Activated CD8-positive, alpha-beta T cell treated with anti-CD3 and anti-CD28 coated beads, Interleukin-2, amount 10 ng/mL, durations not matched to agents 7 days and 5 days (primary cell): ENCODE measurements at regions of chr17 and their contacts with region 1.

Region 1: GRCh38 chr17:72556944-72557826 is 436.4 kb downstream of the SOX9 start:
- DNase-seq: peak; percentile 78
- ATAC-seq: peak; percentile 85
- H3K4me3 Mint-ChIP-seq: no peak overlapping the region
- H3K27ac Mint-ChIP-seq: no peak overlapping the region
- H3K4me1 Mint-ChIP-seq: no peaks in the 10 kb centered on the region
- H3K27me3 Mint-ChIP-seq: no peaks in the 10 kb centered on the region

Region 2: GRCh38 chr17:72578817-72579470 is 21.8 kb after region 1 on chr17:
- CTCF ChIA-PET with region 1: interaction called, 12 read pairs
- POLR2A ChIA-PET with region 1: no interaction called
- DNase-seq: no peak
- ATAC-seq: no peak
- H3K4me3 Mint-ChIP-seq: no peak overlapping the region
- H3K27ac Mint-ChIP-seq: no peak overlapping the region
- H3K4me1 Mint-ChIP-seq: no peaks in the 10 kb centered on the region
- H3K27me3 Mint-ChIP-seq: peaks cover 30% of the 10 kb centered on the region

Region 3: DNA sequence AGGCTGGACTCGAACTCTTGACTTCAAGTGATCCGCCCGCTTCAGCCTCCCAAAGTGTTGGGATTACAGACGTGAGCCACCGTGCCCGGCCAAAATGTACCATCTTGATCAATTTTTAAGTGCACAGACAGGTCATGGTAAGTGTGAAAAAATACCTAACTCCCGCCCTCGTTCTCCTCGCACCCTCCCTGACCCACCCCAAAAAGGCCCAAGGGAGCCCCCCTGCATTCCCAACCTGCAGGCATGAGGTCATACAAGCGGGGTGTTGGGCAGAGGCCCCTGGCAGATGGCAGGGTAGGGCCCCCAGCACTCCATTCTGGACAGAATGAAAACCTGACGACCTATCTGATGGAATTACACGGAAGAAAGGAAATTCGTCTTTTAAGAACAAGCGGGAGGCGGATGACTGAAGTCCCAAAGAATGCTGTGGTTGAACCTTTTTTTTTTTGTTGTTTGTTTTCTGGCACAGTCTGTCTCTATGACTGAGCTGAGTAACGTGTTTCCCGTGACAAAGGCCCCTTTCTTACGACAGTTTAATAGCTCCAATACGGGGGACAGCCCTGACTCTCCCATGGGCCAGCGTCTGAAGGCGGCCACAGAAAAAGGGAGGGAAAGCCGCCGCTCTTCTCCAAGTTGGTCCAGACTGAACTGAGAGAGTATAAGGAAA is 158.9 kb after region 1 on chr17:
- CTCF ChIA-PET with region 1: interaction called, 259 read pairs
- POLR2A ChIA-PET with region 1: no interaction called
- DNase-seq: no peak
- ATAC-seq: no peak
- H3K4me3 Mint-ChIP-seq: no peak overlapping the region
- H3K27ac Mint-ChIP-seq: no peak overlapping the region
- H3K4me1 Mint-ChIP-seq: peaks cover 54% of the 10 kb centered on the region
- H3K27me3 Mint-ChIP-seq: no peaks in the 10 kb centered on the region

Region 4: GRCh38 chr17:73156166-73156840 is 599.1 kb after region 1 on chr17:
- CTCF ChIA-PET with region 1: interaction called, 46 read pairs
- POLR2A ChIA-PET with region 1: no interaction called
- DNase-seq: peak; percentile 70
- ATAC-seq: peak; percentile 95
- H3K4me3 Mint-ChIP-seq: no peak overlapping the region
- H3K27ac Mint-ChIP-seq: no peak overlapping the region
- H3K4me1 Mint-ChIP-seq: no peaks in the 10 kb centered on the region
- H3K27me3 Mint-ChIP-seq: peaks cover 20% of the 10 kb centered on the region

Region 5: DNA sequence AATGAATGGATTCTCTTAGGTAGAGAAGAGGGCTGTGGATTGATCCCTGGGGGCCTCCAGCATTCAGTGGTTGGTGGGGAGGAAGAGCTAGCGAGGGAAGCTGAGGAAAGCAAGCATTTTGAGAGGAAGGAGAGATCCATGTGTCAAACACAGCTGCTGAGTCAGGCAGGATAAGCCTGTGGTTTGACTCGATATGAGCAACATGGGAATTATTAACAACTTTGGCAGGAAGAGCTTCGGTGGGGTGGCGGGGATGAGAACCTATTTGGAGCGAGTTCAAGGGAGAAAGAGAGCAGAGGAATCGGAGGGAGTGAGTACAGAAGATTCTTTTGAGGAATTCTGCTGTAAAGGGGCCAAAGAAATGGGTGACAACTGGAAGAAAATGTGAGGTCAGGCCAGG is 814.1 kb after region 1 on chr17:
- CTCF ChIA-PET with region 1: interaction called, 20 read pairs
- POLR2A ChIA-PET with region 1: no interaction called
- DNase-seq: no peak
- ATAC-seq: no peak
- H3K4me3 Mint-ChIP-seq: no peak overlapping the region
- H3K27ac Mint-ChIP-seq: no peak overlapping the region
- H3K4me1 Mint-ChIP-seq: no peaks in the 10 kb centered on the region
- H3K27me3 Mint-ChIP-seq: peaks cover 4% of the 10 kb centered on the region